Dorsolateral prefrontal cortex (tissue), 120 donors: ENCODE measurements at regions of chr19 and their contacts with region 1.

Region 1: GRCh38 chr19:2578901-2579677 is 103.2 kb downstream of the GADD45B start:
- DNase-seq: peak; percentile 78 to 88 (median 85)
- H3K4me3 ChIP-seq: peak overlapping the region; percentile 34 to 74 (median 60)
- H3K27ac ChIP-seq: peak overlapping the region in 57 of 59 donors; percentile 14 to 88 (median 74)
- H3K27me3 ChIP-seq: no peaks in the 10 kb centered on the region
- CTCF ChIP-seq: peak; percentile 77 to 97 (median 91)

Region 2: GRCh38 chr19:2543463-2544442 is 35.3 kb before region 1 on chr19:
- intact Hi-C with region 1: loop called in 1 of 2 experiments (anchors 5 kb)
- DNase-seq: peak; percentile 83 to 97 (median 94)
- H3K4me3 ChIP-seq: peak overlapping the region in 55 of 59 donors; percentile 2 to 58 (median 37)
- H3K27ac ChIP-seq: peak overlapping the region; percentile 89 to 100 (median 98)
- H3K27me3 ChIP-seq: no peaks in the 10 kb centered on the region
- CTCF ChIP-seq: peak in 38 of 56 donors; percentile 3 to 56 (median 33)

Region 3: GRCh38 chr19:2549701-2550191 is 29.3 kb before region 1 on chr19:
- intact Hi-C with region 1: loop called in 1 of 2 experiments (anchors 1 kb)
- DNase-seq: peak in 9 of 10 donors; percentile 73 to 91 (median 84)
- H3K4me3 ChIP-seq: peak overlapping the region in 2 of 59 donors; percentile 10 to 35
- H3K27ac ChIP-seq: peak overlapping the region in 58 of 59 donors; percentile 66 to 100 (median 92)
- H3K27me3 ChIP-seq: no peaks in the 10 kb centered on the region
- CTCF ChIP-seq: peak in 5 of 56 donors; percentile 8 to 18 (median 13)

Region 4: DNA sequence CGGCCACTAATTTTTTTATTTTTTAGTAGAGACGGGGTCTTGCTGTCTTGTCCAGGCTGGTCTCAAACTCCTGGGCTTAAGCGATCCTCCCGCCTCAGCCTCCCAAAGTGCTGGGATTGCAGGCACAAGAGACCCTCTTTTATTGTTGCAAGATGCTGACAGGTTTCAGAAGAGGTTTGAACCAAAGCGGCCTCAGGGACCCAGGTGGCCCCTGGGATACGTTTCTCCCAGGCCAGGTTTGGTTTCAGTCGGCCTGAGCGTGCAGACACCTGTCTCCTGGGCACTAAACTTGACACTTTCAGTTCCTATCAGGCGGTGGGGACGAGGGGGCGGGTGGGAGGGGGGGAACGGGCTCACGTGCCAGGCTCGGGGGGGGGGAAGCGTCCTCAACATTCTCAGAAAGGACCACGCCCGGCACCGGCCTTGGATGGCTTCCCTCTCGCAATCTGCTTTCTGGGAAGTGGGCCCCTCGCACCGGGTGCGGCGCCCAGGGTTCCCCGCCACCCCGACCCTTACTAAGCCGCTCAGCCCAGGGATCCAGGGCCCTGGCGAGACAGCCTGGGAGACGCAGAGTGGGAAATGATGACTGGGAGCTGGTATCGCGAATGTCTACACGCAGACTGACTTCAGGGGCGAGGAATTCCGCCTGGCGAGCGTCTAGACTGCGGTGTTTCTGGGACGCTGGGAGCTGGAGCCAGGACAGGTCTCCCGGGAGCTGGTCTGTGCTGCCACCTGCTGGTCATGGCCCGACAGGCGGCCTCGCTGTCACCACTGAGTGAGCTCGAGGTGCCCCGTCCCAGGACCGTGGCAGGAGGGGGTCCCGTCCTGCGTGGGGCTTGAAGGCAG is 31.8 kb after region 1 on chr19:
- intact Hi-C with region 1: loop called in 1 of 2 experiments (anchors 1 kb)
- DNase-seq: peak; percentile 85 to 93 (median 92)
- H3K4me3 ChIP-seq: peak overlapping the region in 58 of 59 donors; percentile 28 to 71 (median 53)
- H3K27ac ChIP-seq: peak overlapping the region in 40 of 59 donors; percentile 2 to 84 (median 56)
- H3K27me3 ChIP-seq: no peaks in the 10 kb centered on the region
- CTCF ChIP-seq: peak; percentile 94 to 100 (median 98)

Region 5: GRCh38 chr19:2661615-2662014 is 82.5 kb after region 1 on chr19:
- intact Hi-C with region 1: no loop called
- DNase-seq: no peak
- H3K4me3 ChIP-seq: no peak overlapping the region
- H3K27ac ChIP-seq: peak overlapping the region in 1 of 59 donors; percentile 93
- H3K27me3 ChIP-seq: no peaks in the 10 kb centered on the region
- CTCF ChIP-seq: peak in 3 of 56 donors; percentile 11 to 19 (median 13)